ENCODE measurements at regions of chr10 and their contacts with region 1.

Region 1: GRCh38 chr10:11551916-11552602 is 59.4 kb downstream of the USP6NL start:
- DNase-seq: peak; percentile 65
- H3K27ac ChIP-seq: no peak overlapping the region
- CTCF ChIP-seq: no peak

Region 2: DNA sequence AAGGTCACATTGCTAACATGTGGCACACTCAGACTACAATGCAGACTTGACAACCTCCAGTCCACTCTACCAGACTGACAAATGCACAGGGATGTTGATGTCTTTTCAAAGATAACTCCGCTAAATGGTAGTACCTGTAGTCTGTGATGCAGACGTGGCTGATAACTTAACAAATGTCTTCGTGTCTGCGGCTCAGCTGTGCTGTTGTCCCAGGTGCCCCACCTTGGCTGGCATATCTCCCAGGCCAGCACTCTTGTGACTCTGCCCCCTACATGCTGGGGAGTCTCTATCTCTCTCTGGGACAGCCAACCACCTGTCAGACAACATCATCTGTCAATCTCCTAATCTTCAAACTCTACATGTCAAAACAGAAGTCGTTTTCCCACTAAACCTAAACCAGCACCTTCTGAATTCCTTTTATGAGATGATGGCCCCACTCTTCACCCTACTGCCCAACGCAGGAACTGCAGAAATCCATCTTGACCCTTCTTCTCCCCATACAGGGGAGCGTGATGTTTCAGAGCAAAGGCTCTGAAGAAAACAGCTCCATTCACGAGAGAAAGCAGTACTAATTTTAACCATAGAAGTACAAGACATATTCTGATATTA is 97.0 kb before region 1 on chr10:
- CTCF ChIA-PET with region 1: interaction called, 13 read pairs
- POLR2A ChIA-PET with region 1: no interaction called
- DNase-seq: no peak
- H3K27ac ChIP-seq: no peak overlapping the region
- CTCF ChIP-seq: no peak

Region 3: DNA sequence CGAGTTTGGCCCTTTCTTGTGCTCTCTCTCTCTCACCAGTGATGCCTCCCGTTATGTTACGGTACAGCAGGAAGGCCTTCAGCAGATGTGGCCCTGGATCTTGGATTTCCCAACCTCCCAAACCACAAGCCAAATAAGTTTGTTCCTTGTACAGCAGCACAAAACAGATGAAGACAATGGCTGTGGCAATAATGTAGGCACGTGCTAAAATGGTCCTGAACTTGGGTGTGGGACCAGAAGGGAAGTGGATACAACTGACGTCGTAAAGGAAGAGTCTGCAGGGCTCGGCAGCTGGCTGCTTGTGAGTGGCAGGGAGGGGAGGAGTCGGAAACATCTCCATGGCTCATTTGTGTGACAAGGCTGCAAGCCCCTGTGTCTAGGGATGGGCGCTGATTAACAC is 297.8 kb after region 1 on chr10:
- CTCF ChIA-PET with region 1: no interaction called
- POLR2A ChIA-PET with region 1: no interaction called
- DNase-seq: no peak
- H3K27ac ChIP-seq: no peak overlapping the region
- CTCF ChIP-seq: no peak

Measured in RWPE1 (cell line).